Mammary epithelial cell (primary cell): ENCODE measurements at regions of chr2 and their contacts with region 1.

Region 1: GRCh38 chr2:203804070-203804469 is 63.5 kb upstream of the CTLA4 start:
- DNase-seq: peak; percentile 89
- H3K4me3 ChIP-seq: no peak overlapping the region
- H3K27ac ChIP-seq: peak overlapping the region; percentile 94
- H3K4me1 ChIP-seq: peaks cover 49% of the 10 kb centered on the region
- H3K27me3 ChIP-seq: no peaks in the 10 kb centered on the region
- CTCF ChIP-seq: no peak

Region 2: GRCh38 chr2:202960524-202960923 is 843.5 kb before region 1 on chr2:
- CTCF ChIA-PET with region 1: interaction called, 18 read pairs
- dilution Hi-C with region 1: no loop called
- in situ Hi-C with region 1: no loop called
- intact Hi-C with region 1: no loop called
- DNase-seq: no peak
- H3K4me3 ChIP-seq: no peak overlapping the region
- H3K27ac ChIP-seq: no peak overlapping the region
- H3K4me1 ChIP-seq: no peaks in the 10 kb centered on the region
- H3K27me3 ChIP-seq: no peaks in the 10 kb centered on the region
- CTCF ChIP-seq: no peak

Region 3: DNA sequence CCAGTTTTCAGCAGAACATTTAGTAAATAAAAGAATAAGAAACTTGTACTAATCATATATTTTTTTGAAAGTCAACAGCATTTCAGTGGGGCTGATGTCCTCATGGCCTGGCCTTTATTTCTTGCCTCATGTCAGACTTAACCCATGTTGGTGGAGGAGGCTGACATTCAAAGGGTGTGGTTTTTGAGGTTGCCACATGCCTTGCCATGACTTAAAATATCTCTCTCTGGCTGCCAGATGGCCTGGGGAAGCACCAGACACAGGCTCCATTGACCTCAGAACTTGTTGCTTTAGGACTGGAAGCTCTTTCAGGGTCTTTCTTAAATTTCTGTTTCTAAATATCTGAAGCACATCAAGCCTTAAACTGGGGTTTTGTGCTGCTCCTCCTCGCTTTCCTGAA is 130.1 kb before region 1 on chr2:
- CTCF ChIA-PET with region 1: no interaction called
- dilution Hi-C with region 1: loop called (anchors 10 kb)
- in situ Hi-C with region 1: no loop called
- intact Hi-C with region 1: no loop called
- DNase-seq: peak; percentile 70
- H3K4me3 ChIP-seq: no peak overlapping the region
- H3K27ac ChIP-seq: peak overlapping the region; percentile 32
- H3K4me1 ChIP-seq: peaks cover 21% of the 10 kb centered on the region
- H3K27me3 ChIP-seq: no peaks in the 10 kb centered on the region
- CTCF ChIP-seq: no peak

Region 4: GRCh38 chr2:203840655-203841205 is 36.7 kb after region 1 on chr2:
- CTCF ChIA-PET with region 1: no interaction called
- dilution Hi-C with region 1: no loop called
- in situ Hi-C with region 1: no loop called
- intact Hi-C with region 1: no loop called
- DNase-seq: no peak
- H3K4me3 ChIP-seq: no peak overlapping the region
- H3K27ac ChIP-seq: no peak overlapping the region
- H3K4me1 ChIP-seq: no peaks in the 10 kb centered on the region
- H3K27me3 ChIP-seq: peaks cover 3% of the 10 kb centered on the region
- CTCF ChIP-seq: no peak